Activated CD4-positive, alpha-beta T cell treated with anti-CD3 and anti-CD28 coated beads for 36 hours (primary cell): ENCODE measurements at regions of chr4 and their contacts with region 1.

Region 1: DNA sequence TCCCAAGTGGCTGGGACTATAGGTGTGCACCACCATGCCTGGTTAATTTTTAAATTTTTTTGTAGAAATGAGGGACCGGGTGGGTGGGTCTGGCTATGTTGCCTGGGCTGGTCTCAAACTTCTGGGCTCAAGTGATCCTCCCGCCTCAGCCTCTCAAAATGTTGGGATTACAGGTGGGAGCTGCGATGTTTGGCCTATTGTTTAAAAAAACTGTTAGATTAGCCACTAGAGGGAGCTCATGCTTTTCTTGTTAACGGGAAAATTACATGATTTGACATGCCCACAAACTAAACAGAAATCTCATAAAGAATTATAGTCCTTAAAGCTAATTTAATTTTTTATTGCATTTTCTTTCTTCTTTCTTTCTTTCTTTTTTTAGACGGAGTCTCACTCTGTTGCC is 5.0 kb upstream of the SDAD1 start:
- DNase-seq: peak; percentile 16
- ATAC-seq: no peak
- H3K4me3 Mint-ChIP-seq: no peak overlapping the region
- H3K27ac Mint-ChIP-seq: no peak overlapping the region
- H3K4me1 Mint-ChIP-seq: peaks cover 6% of the 10 kb centered on the region
- H3K27me3 Mint-ChIP-seq: no peaks in the 10 kb centered on the region

Region 2: GRCh38 chr4:75514131-75514948 is 481.4 kb before region 1 on chr4 and contains the starts of genes RCHY1 and THAP6:
- CTCF ChIA-PET with region 1: no interaction called
- POLR2A ChIA-PET with region 1: no interaction called
- intact Hi-C with region 1: loop called in 1 of 2 experiments (anchors 1 kb)
- DNase-seq: peak; percentile 95
- ATAC-seq: peak; percentile 93
- H3K4me3 Mint-ChIP-seq: no peak within 1 kb of the TSS
- H3K27ac Mint-ChIP-seq: peak within 1 kb of the TSS; percentile 95
- H3K4me1 Mint-ChIP-seq: peaks cover 39% of the 10 kb centered on the region
- H3K27me3 Mint-ChIP-seq: no peaks in the 10 kb centered on the region
- total RNA-seq, gene RCHY1: 32.9 to 33.7 TPM
- total RNA-seq, gene THAP6: 18.4 TPM

Region 3: GRCh38 chr4:76028350-76028765 is 32.6 kb after region 1 on chr4:
- CTCF ChIA-PET with region 1: interaction called, 20 read pairs
- POLR2A ChIA-PET with region 1: no interaction called
- intact Hi-C with region 1: no loop called
- DNase-seq: no peak
- ATAC-seq: no peak
- H3K4me3 Mint-ChIP-seq: peak overlapping the region; percentile 31
- H3K27ac Mint-ChIP-seq: peak overlapping the region; percentile 11
- H3K4me1 Mint-ChIP-seq: peaks cover 27% of the 10 kb centered on the region
- H3K27me3 Mint-ChIP-seq: peaks cover 8% of the 10 kb centered on the region

Region 4: DNA sequence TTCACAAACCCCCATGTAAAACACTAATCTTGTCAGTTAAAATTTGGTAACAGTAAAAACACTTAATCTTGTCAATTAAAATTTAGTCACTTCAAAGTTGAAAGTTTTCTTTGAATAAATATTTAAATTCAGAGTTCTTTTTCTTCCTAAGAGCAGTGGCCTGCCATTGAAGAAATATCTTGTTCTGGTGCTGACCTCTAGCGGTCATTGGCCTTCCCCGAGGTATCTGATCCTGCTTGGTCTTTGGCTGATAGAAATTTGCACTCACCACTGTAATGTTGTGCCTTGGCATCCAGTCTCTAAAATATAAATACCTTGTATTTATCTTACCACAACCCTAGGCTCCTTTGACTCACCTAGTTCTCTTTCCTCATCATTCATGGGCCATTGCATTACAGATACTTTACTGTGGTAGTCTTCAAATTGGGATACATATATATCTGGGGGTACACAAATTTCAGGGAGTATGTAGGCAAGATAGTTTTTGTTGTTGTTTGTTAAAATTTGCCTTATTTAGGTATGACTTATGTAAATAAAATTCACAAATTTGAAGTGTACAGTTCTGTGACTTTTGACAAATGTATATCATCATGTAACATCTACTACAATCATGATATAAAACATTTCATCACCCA is 72.0 kb after region 1 on chr4:
- CTCF ChIA-PET with region 1: interaction called, 55 read pairs
- POLR2A ChIA-PET with region 1: no interaction called
- intact Hi-C with region 1: loop called (anchors 1 kb)
- DNase-seq: peak; percentile 87
- ATAC-seq: peak; percentile 88
- H3K4me3 Mint-ChIP-seq: no peak overlapping the region
- H3K27ac Mint-ChIP-seq: no peak overlapping the region
- H3K4me1 Mint-ChIP-seq: no peaks in the 10 kb centered on the region
- H3K27me3 Mint-ChIP-seq: peaks cover 2% of the 10 kb centered on the region

Region 5: DNA sequence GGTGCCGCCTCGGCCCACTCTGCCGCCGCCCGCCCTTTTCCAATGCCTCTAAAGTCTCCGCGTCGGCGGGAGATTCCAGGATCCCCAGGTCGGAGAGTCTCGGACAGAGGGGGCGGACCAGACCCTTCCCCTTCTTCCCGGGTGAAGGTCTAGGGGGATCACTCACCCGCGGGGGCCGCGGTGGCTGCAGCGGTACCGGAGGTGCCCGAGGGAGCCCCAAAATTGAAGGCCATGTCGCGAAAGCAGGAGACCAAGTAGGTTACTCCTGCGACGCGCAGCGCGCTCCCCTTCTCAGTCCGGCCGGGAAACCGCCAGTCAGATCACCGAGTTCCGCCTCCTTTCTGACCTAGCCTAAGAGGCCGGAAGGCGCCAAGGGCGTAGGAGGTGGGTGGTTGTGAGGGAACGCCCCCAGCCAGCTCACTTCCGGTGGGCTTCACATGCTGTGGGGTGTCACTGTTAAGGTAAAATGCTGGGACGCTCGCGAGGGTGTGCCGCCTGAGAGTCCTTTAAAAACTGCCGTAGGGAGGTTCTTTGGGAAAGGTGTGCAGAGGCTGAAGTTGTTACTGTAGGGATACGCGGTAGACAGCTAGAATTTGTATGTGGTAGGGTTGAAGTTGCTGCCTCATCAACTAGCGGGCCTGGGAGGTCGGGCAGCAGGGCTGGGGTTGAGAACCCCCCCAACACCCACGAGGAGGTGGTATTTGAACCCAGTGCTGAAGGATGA is 152.6 kb after region 1 on chr4 and contains the start of gene NUP54:
- CTCF ChIA-PET with region 1: interaction called, 5 read pairs
- POLR2A ChIA-PET with region 1: interaction called, 3 read pairs
- intact Hi-C with region 1: loop called (anchors 1 kb)
- DNase-seq: peak; percentile 97
- ATAC-seq: peak; percentile 97
- H3K4me3 Mint-ChIP-seq: peak within 1 kb of the TSS; percentile 86
- H3K27ac Mint-ChIP-seq: peak within 1 kb of the TSS; percentile 89
- H3K4me1 Mint-ChIP-seq: peaks cover 25% of the 10 kb centered on the region
- H3K27me3 Mint-ChIP-seq: no peaks in the 10 kb centered on the region
- total RNA-seq, gene NUP54: 58.2 to 67.3 TPM